ENCODE measurements at regions of chr10 and their contacts with region 1.

Region 1: GRCh38 chr10:52308251-52309031 is 5.6 kb upstream of the DKK1 start:
- DNase-seq: peak; percentile 54
- H3K4me3 ChIP-seq: peak overlapping the region; percentile 50
- CTCF ChIP-seq: peak; percentile 61

Region 2: DNA sequence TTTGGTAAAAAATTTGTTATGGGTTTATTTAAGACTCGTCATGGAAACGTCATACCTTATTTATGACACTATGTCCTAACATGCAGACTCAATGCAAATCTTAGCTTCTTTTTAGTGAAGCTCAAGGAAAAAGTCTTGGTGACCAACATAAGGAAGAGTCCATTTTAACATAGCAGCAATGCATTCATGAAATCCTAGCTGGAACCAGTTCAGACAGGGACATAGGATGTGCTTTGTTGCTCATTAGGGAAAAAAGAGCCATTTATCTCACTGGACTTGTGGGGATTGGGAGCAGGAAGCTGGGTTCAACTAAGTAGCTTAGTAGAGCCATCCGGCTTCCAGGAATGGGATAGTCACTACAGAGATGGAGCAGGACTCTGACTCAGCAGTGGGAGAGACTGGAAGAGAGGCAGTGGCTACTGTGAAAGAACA is 95.1 kb before region 1 on chr10:
- in situ Hi-C with region 1: no loop called
- DNase-seq: no peak
- H3K4me3 ChIP-seq: no peak overlapping the region
- CTCF ChIP-seq: no peak

Region 3: GRCh38 chr10:52474265-52474664 is 165.8 kb after region 1 on chr10:
- in situ Hi-C with region 1: loop called (anchors 5 kb)
- DNase-seq: no peak
- H3K4me3 ChIP-seq: no peak overlapping the region
- CTCF ChIP-seq: no peak